ENCODE measurements at regions of chr3 and their contacts with region 1.

Region 1: DNA sequence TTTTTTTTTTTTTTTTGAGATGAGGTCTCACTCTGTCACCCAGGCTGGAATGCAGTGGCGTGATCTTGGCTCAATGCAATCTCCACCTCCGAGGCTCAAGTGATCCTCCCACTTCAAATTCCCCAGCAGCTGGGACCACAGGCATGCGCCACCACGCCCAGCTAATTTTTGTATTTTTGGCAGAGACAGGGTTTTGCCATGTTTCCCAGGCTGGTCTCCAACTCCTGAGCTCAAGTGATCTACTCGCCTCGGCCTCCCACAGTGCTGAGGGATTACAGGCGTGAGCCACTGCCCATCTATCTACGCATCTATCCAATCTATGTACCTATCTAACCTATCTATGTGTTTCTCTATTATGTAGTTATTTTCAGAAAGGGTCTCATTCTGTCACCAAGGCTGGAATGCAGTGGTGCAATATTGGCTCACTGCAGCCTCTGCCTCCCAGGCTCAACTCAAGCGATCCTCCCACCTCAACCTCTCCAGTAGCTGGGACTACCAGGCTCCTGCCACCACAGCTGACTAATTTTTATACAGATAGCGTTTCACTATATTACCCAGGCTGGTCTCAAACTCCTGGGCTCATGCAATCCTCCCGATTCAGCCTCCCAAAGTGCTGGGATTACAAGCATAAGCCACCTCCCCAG is 20.2 kb upstream of the GPX1 start:
- DNase-seq: no peak
- H3K4me3 ChIP-seq: no peak overlapping the region
- H3K27ac ChIP-seq: no peak overlapping the region
- H3K4me1 ChIP-seq: no peaks in the 10 kb centered on the region
- H3K27me3 ChIP-seq: no peaks in the 10 kb centered on the region
- CTCF ChIP-seq: no peak

Region 2: GRCh38 chr3:48662805-48663414 is 715.5 kb before region 1 on chr3 and contains the start of gene CELSR3:
- CTCF ChIA-PET with region 1: interaction called, 14 read pairs
- POLR2A ChIA-PET with region 1: no interaction called
- intact Hi-C with region 1: no loop called
- DNase-seq: peak; percentile 86
- H3K4me3 ChIP-seq: peak within 1 kb of the TSS; percentile 56
- H3K27ac ChIP-seq: peak within 1 kb of the TSS; percentile 80
- H3K4me1 ChIP-seq: no peaks in the 10 kb centered on the region
- H3K27me3 ChIP-seq: no peaks in the 10 kb centered on the region
- CTCF ChIP-seq: no peak
- total RNA-seq, gene CELSR3: 1.2 and 2.1 TPM in 2 replicates

Region 3: DNA sequence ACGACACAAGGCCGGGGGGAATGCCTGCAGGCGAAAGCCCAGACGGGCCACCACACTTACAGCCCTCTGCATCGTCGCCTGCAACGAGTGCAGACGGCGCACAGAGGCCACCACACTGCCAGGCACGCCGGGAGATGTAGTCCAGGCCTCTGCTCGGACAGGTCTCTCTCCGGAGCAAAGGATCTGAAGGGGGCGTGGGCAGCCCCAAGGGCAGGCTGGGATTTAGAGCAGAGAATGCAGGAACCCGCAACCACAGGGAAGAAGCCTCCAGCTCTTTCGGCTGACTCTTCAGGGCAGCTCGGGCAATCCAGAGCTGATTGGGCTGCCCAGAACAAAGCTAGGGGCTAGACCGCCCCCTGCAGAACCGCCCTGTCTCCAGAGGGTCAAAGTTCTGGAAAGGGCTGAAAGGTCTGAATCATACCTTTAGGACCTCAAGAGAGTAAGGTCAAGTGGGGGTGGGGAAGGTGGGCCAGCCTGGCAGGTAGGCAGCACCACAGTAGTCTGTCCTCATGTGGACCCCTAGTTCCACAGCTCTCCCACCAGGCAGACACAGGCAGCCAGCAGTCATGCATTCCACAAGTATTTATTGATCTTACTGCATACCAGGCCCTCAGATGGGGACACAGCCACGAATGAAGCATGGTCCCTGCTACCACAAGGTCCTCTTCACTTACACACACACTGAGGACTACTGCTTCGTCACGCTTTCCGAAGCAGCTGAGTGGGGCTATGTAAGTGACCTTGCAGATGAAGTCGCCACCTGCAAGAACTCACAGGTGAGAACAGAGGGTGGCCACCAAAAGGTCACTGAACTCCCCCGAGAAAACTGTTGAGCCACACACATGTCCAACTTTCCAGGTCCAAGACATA is 44.2 kb after region 1 on chr3 and contains the start of gene AMT:
- CTCF ChIA-PET with region 1: no interaction called
- POLR2A ChIA-PET with region 1: no interaction called
- intact Hi-C with region 1: no loop called
- DNase-seq: no peak
- H3K4me3 ChIP-seq: no peak within 1 kb of the TSS
- H3K27ac ChIP-seq: no peak within 1 kb of the TSS
- H3K4me1 ChIP-seq: no peaks in the 10 kb centered on the region
- H3K27me3 ChIP-seq: no peaks in the 10 kb centered on the region
- CTCF ChIP-seq: no peak
- total RNA-seq, gene AMT: 1.3 and 2.1 TPM in 2 replicates

Measured in A673 (cell line).